Posterior cingulate gyrus (tissue), 11 donors: ENCODE measurements at regions of chr1 and their contacts with region 1.

Region 1: DNA sequence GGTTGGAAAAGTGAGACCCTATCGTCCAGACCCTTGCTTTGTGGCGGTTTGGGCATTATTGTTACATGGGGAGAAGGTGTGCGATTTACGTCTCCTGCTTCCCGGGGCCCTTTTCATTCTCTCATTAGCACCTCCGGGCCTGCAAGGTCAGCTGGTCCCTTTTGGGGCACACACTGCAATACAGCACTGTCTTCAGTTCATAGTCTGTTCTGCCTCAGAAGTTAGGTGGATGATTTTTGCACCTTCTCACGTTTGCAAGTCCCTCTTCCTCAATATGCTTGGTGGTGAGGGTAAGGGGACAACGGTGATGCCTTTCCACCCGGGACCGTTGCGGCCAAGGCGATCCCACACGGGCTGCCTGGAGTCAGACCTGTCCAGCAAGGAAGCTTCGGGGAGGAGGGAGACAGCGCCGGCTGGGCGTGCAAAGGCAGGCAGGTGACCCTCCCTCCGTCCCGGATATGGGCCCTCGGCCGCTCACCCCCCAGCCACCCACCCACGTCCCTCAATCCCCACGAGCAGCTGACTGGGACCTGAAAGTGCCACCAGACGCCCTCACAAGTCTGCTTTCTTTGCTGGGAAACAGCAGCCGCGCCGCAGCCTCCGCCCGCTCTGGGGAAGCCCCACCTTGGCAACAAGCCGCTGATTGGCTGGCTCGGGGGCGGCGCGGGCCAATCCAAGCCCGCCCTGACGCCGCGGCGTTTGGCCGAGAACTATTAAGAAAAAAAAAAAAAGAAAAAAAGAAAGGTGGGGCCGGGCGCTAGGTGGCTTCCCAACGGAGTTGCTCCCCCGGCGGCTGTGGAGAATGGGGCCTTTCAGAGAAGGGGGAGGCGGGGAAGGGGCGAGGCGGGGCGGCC is 21.7 kb downstream of the BTG2 start:
- DNase-seq: peak; percentile 87 to 99 (median 94)

Region 2: DNA sequence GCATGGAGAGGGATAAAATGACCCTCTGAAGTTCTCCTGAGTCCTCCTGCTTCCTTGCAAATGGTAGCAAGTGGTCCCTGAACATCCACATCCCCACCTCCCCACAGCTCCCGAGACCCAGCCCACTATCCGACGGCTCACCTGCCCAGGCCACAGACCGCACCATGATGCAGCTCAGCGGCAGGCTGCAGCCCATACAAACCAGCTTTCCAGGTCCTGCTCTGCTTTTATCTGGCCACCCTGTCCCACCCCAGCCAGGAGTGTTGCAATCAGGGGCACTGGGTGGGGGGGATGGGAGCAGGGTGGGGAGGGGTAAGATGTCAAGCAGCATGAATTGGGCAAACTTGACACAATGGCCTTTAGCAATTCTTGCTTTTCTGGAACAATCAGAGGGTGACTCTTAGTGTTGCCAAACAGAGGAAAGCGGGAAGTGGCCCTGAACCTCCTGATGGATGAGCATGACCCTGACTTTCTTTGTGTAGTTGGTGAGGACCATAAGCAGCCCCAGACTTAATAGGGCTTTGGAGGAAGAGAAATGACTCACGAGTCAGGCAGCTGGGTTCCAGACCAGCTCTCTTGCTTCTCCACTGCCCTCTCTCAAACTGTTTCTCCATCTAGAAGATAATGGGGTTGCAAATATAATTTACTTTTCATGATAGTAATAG is 97.5 kb before region 1 on chr1 and contains the start of gene CHIT1:
- intact Hi-C with region 1: no loop called
- DNase-seq: no peak

Region 3: DNA sequence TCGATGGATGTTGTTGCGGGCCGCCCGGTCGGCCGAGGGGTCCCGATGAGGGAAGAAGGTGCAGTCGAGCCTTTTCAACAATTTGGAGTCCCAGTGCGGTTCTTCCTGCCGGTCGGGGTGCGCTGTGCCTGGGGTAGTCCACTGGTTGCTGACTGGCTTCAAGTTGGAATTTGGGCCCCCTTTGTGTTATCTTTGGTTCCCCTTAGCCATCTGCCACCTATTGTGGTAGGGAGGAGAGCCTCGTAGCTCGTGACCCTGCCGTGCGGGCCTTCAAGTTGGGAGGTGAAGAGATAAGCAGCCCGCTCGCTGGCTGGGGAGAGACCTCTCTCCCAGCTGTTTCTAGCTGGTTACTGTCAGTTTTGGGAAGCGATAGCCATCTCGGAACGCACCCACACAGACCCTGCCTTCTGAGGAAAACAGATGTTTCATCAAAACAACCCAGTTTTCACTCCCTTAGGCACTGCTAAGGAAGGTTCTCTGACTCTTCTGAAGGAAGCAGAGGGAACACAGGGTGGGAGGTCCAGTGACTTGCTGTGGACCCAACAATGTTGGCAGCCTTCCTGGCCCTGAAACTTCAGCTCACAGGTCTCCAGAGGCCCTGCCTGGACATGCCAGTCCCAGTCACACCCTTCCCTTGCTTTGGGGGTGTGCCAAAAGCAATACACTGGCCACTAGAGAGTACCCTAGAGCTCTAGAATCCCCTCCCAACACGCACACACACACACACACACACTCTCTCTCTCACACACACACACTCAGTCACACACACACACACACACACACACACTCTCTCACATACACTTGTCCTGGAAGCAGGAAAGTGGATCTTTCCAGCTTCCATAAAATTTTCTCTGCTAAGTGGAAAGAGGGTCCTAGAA is 20.7 kb before region 1 on chr1:
- intact Hi-C with region 1: loop called (anchors 1 kb)
- DNase-seq: peak in 9 of 10 donors; percentile 46 to 94 (median 70)

Region 4: DNA sequence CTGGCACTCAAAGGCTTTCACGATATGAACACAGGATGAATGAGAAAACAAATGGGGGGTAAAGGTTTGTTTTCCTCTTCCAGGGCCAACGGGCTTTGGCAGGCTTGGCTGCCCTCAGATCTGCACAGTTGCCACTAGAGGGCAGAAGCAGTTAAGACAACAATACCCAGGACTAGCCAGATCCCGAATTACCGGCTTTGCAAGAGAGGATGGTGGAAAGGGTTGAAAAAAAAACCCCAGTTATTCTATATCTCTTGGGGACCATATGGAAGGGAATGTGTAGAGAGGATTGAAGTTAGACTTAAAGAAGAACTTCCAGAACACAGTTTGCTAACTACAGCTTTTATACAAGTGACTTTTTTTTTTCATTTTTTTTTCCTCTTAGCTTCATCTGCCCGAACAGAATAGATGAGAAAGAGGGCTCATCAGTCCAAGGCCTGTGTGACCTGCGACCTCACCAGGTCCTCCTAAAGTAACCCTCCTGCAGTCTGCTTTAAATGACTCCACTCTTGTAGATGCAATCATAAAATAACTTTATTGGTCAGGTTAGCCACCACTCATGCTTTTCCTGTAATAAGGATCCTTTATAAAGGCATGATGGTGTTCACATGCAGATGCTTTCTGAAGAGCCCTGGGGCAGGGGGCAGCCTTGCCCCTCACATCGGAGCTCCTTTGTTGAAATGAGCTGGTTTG is 13.2 kb after region 1 on chr1:
- intact Hi-C with region 1: no loop called
- DNase-seq: peak; percentile 39 to 95 (median 72)